Posterior cingulate gyrus (tissue), 11 donors: ENCODE measurements at regions of chr1 and their contacts with region 1.

Region 1: GRCh38 chr1:1574721-1575537 is at the start of gene SSU72:
- DNase-seq: peak; percentile 80 to 98 (median 90)

Region 2: DNA sequence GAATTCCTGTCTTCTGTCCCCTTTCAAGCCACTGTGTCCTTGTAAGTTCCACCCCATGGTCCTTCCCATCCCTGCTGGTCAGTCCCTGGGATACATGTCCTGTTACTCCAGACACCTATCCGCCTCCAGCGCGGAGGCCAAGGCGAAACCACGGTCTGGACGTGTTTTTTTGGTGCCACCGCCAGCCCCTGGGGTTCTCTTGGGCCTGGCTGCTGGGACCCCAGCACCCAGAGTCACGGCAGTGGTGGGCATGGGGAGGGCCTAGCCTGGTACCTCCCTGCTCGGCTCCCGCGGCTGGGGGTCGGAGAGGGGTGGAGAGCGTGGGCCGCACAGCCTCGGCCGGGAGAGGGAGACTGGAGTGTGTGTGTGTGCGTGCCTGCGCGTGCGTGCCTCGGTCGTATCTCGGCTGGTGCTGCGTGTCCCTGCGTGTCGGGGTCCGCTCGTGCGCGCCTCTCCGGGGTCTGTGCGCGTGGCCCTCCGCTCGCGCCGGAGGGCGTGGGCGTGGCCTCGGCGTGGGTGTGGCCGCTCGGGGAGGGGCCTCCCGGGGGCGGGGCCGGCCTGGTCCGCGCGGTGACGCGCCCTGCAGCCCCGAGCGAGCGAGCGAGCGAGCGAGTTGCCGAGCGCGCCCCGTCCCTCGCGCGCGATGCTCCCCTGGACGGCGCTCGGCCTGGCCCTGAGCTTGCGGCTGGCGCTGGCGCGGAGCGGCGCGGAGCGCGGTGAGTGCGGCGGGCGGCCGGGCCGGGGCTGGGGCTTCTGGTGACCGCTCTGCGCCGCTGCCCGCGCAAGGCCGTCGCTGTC is 139.6 kb before region 1 on chr1 and contains the start of gene VWA1:
- intact Hi-C with region 1: no loop called
- DNase-seq: peak; percentile 63 to 97 (median 76)

Region 3: GRCh38 chr1:1615256-1616044 is 40.5 kb after region 1 on chr1 and contains the start of gene MIB2:
- intact Hi-C with region 1: loop called (anchors 2 kb)
- DNase-seq: peak; percentile 92 to 100 (median 96)

Region 4: GRCh38 chr1:1630271-1630964 is 55.5 kb after region 1 on chr1:
- intact Hi-C with region 1: no loop called
- DNase-seq: peak in 9 of 10 donors; percentile 34 to 96 (median 68)